Gastrocnemius medialis (tissue), 4 donors: ENCODE measurements at regions of chr12 and their contacts with region 1.

Region 1: DNA sequence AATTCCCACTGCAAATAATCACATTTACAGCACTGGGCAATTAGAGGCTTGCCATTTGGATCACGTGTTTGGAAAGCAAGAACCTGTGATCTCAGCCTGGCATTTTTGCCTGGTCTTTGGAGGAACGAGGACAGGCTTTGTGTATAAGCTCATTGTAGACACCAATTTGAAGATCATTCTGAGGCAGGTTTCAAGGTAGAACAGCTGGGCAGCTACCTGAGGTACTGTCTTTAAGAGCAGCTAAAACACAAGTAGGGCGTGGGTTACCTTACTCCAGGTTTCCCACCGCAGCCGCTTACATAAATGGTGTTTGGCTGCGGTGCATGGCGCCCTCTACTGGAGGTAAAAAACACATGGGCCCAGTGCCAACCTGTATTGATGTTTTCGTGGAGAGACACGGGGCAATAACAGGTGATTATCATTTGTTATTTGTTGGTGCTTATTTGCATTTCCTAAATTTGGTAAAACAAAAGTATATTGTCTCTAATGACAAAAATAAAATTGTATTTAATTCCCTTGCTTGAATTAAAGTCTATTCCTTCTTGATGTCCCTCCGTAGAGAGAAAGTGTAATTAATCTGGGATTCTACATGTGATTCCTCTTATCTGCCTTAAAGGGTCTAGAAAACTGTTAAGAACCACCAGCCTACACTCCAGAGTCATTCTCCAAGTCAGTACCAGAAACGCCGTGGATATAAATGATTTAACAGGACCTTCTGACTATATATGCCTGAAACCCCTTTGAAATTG is 69.7 kb downstream of the SVOP start:
- DNase-seq: peak; percentile 34 to 61
- ATAC-seq: peak; percentile 77 to 93
- H3K4me3 ChIP-seq: no peak overlapping the region
- H3K27ac ChIP-seq: no peak overlapping the region
- H3K4me1 ChIP-seq: peaks cover 4 to 8% of the 10 kb centered on the region in 2 donors
- H3K27me3 ChIP-seq: no peaks in the 10 kb centered on the region
- CTCF ChIP-seq: peak; percentile 84 to 92 (median 88)
- POLR2A ChIP-seq: no peak

Region 2: DNA sequence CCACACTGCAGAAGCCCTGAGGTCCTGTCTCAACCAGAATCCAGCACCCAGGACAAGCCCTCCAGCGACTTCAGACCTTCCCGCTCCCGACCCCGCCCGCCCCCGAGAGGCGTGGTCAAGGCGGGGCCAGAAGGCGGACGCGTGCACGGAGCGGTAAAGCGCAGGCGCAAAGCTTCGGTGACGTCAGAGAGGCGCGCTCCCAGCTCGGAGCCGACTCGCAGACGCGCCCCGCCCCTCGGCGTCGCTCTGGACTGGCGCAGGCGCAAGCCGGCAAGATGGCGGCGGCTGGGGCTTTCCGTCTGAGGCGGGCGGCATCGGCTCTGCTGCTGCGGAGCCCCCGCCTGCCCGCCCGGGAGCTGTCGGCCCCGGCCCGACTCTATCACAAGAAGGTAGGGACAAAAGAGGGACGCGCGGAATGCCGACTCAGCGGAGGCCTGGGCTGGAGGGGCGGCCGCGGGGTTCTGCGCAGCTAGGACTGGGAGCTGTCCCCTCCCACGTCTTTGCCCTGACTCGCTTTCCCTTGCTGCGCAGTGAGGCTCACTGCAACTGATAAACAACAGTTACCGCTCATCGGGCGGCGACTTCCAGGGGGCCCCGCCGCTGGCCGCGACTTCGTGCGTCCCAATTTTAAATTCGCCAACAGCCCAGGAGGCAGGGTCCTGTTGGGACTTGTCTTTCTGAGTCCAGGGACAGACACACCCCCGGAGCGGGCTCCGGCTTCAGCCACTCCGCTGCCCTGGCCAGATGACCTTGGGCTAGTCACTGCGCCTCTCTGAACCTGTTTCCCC is 388.6 kb before region 1 on chr12 and contains the start of gene ISCU:
- in situ Hi-C with region 1: no loop called
- intact Hi-C with region 1: loop called (anchors 2 kb)
- DNase-seq: peak; percentile 95 to 96
- ATAC-seq: peak; percentile 70 to 71
- H3K4me3 ChIP-seq: peak within 1 kb of the TSS; percentile 90 to 100 (median 94)
- H3K27ac ChIP-seq: peak within 1 kb of the TSS; percentile 92 to 97 (median 96)
- H3K4me1 ChIP-seq: peaks cover 55 to 56% of the 10 kb centered on the region in 2 donors
- H3K27me3 ChIP-seq: no peaks in the 10 kb centered on the region
- CTCF ChIP-seq: no peak
- POLR2A ChIP-seq: peak; percentile 96 to 98
- total RNA-seq, gene ISCU: 232 to 337 (median 249) TPM

Region 3: GRCh38 chr12:108633534-108634248 is 317.5 kb before region 1 on chr12 and contains the start of gene SELPLG:
- in situ Hi-C with region 1: loop called in 3 of 4 experiments (anchors 25 kb)
- intact Hi-C with region 1: no loop called
- DNase-seq: peak; percentile 36 to 59
- ATAC-seq: peak in 1 of 2 donors; percentile 26
- H3K4me3 ChIP-seq: peak within 1 kb of the TSS in 1 of 4 donors; percentile 24
- H3K27ac ChIP-seq: peak within 1 kb of the TSS in 3 of 4 donors; percentile 31 to 48 (median 44)
- H3K4me1 ChIP-seq: peaks cover 12 to 14% of the 10 kb centered on the region in 2 donors
- H3K27me3 ChIP-seq: peaks cover 0 to 11% (median 0%) of the 10 kb centered on the region in 3 donors
- CTCF ChIP-seq: no peak
- POLR2A ChIP-seq: peak in 1 of 2 donors; percentile 10
- total RNA-seq, gene SELPLG: 0.19 to 5.0 (median 2.6) TPM

Region 4: DNA sequence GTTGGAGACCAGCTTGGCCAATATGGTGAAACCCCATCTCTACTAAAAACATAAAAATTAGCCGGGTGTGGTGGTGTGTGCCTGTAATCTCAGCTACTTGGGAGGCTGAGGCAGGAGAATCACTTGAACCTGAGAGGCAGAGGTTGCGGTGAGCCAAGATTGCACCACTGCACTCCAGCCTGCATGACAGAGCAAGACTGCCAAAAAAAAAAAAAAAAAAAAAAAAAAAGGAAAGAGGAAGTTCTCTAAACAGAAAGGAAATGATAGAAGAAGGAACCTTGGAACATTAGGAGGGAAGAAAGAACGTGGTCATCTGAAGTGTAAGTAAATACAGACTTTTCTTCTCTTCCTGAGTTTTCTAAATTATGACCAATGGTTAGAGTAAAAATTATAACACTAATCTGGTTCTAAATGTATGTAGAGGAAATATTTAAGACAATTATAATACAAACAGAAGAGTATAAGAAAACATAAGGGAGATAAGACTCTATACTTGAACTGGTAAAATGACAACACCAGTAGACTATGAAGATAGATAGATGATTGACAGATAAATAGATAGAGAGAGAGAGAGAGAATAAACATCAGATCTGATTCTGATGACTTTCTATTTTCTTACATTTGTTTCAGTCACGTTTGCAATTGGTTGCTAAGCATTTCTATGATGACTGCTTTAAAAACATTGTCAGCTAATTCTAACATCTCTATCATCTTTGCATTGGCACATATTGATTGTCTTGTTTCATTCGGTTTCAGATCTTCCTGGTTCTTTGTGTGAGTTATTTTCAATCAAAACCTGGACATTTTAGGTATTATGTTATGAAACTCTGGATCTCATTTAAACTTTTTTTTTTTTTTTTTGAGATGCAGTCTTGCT is 206.9 kb before region 1 on chr12:
- in situ Hi-C with region 1: loop called in 1 of 4 experiments (anchors 10 kb)
- intact Hi-C with region 1: no loop called
- DNase-seq: no peak
- ATAC-seq: no peak
- H3K4me3 ChIP-seq: no peak overlapping the region
- H3K27ac ChIP-seq: no peak overlapping the region
- H3K4me1 ChIP-seq: no peaks in the 10 kb centered on the region
- H3K27me3 ChIP-seq: no peaks in the 10 kb centered on the region
- CTCF ChIP-seq: no peak
- POLR2A ChIP-seq: no peak

Region 5: GRCh38 chr12:108803428-108804105 is 147.6 kb before region 1 on chr12:
- in situ Hi-C with region 1: no loop called
- intact Hi-C with region 1: loop called (anchors 5 kb)
- DNase-seq: peak; percentile 69 to 80
- ATAC-seq: peak; percentile 61 to 70
- H3K4me3 ChIP-seq: peak overlapping the region in 1 of 4 donors; percentile 11
- H3K27ac ChIP-seq: peak overlapping the region; percentile 93 to 97 (median 96)
- H3K4me1 ChIP-seq: peaks cover 62% of the 10 kb centered on the region in 2 donors
- H3K27me3 ChIP-seq: no peaks in the 10 kb centered on the region
- CTCF ChIP-seq: peak; percentile 93 to 97 (median 95)
- POLR2A ChIP-seq: peak in 1 of 2 donors; percentile 11

Region 6: DNA sequence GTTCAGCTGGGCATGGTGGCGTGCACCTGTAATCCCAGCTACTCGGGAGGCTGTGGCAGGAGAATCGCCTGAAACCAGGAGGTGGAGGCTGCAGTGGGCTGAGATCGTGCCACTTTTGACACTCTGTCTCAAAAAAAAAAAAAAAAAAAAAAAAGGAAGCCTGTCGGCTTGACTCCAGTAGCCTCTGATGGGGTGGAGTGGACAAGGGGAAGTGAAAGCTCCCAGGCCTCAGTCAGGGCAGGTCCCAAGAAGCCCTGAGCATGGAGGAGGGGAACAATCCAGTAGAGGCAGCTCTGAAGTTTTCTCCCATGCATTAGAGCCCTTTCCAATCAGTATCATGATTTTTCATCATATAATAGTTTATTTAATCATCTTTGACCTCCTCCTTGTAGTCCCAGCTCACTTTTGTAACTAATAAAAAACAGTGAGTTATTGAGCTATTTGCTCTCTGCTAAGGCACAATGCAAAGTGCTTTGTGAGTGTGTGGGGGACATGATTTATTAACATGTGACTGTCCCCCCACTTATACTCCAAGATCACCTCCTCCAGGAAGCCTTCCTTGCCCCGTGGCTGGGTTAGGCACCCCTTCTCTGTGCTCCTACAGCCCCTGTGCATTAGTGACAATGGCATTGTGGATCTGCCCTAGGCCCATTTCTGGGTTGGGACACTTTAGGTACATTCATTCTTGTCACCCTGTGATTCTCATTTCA is 89.1 kb before region 1 on chr12:
- in situ Hi-C with region 1: loop called in 1 of 4 experiments (anchors 10 kb)
- intact Hi-C with region 1: loop called (anchors 5 kb)
- DNase-seq: no peak
- ATAC-seq: no peak
- H3K4me3 ChIP-seq: no peak overlapping the region
- H3K27ac ChIP-seq: no peak overlapping the region
- H3K4me1 ChIP-seq: peaks cover 11% of the 10 kb centered on the region in 2 donors
- H3K27me3 ChIP-seq: no peaks in the 10 kb centered on the region
- CTCF ChIP-seq: no peak
- POLR2A ChIP-seq: no peak